Cardiac septum (tissue), 1 donor: ENCODE measurements at regions of chr19 and their contacts with region 1.

Region 1: DNA sequence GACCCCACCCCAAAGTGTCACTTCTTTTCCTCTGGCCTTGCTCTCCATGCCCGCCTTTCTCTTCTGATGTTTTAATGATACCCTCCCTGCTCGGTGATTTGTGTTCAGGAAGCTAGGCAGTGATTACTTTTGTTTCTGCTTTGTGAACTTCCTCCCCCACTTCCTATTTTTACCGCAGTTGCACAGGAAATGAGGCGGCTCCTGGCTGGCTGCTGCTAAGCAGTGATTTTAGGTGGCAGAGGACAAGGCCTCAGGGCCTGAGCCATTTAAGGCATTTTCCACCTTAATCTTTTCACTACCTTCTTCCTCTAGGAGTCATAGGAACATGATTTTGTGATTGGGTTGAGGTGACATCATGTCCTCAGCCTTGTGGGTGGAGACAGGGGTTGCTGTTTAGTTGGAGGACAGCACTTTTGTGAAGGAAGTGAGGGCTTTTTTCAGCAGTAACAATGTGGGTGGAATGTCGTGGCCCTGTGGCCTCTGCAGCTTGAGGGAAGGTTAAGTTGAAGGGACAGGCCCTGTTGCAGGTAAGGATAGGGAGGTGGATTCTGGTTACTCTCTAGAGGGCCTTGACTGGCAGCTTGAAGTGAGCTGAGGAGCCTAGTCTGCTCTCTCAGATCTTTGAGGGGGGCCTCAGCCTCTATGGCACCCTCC is 15.7 kb downstream of the GARRE1 start:
- DNase-seq: peak; percentile 88

Region 2: DNA sequence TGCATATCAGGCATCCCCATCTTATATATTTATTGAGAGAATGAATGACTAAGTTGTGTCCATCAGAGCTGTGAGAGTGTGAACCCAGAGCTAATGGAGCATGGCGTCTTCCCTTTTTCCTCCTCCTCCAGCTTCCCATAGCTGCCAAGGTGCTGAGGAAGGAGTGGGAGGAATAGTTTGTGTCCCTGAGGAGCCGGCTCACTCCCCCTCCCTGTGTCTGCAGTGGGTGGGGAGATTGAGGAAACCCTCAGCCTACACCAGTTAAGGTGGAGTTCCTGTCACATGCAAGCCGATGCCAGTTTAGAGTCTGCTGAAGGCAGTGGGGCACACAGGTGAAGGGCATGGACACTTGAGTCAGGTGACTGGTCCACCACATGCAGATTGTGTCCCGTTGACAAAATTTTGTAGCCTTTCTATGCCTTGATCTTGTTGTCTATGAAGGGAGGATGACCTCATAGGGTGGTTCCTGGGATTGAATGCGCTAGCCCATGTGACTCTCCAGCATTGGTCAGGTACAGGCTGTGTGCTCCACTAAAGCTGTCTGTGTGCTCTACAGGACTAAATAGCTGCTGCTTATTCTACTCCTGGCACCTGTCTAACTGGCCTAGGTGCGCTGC is 47.3 kb after region 1 on chr19:
- intact Hi-C with region 1: loop called (anchors 5 kb)
- DNase-seq: no peak